ENCODE measurements at regions of chr13 and their contacts with region 1.

Region 1: GRCh38 chr13:31431722-31432137 is 232.0 kb downstream of the B3GLCT start:
- DNase-seq: peak; percentile 40
- ATAC-seq: peak; percentile 61
- H3K4me3 ChIP-seq: no peak overlapping the region
- H3K4me3 Mint-ChIP-seq: no peak overlapping the region
- H3K27ac ChIP-seq: no peak overlapping the region
- H3K27ac Mint-ChIP-seq: no peak overlapping the region
- H3K4me1 ChIP-seq: no peaks in the 10 kb centered on the region
- H3K4me1 Mint-ChIP-seq: no peaks in the 10 kb centered on the region
- H3K27me3 ChIP-seq: no peaks in the 10 kb centered on the region
- H3K27me3 Mint-ChIP-seq: peaks cover 19% of the 10 kb centered on the region
- CTCF ChIP-seq: peak; percentile 91

Region 2: DNA sequence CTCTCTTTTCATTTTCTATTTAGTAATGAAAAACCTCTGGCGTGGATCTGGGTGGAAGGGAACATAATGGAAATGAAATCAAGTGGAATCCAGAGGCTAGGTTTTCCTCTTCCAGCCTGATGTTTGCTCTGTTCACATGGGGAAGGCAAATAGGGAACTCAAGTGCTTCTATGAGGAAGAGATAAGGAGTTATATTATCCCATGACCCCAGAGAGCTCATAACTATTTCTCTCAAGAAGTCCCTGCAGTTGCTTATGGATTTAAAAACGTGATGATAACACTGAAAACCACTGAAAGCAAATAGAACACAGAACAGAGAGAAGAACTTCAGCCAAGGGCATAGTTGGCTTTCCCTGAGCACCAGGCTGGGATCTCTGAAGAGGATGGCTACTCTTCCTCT is 74.1 kb before region 1 on chr13:
- CTCF ChIA-PET with region 1: no interaction called
- POLR2A ChIA-PET with region 1: no interaction called
- intact Hi-C with region 1: no loop called
- DNase-seq: no peak
- ATAC-seq: no peak
- H3K4me3 ChIP-seq: no peak overlapping the region
- H3K4me3 Mint-ChIP-seq: no peak overlapping the region
- H3K27ac ChIP-seq: no peak overlapping the region
- H3K27ac Mint-ChIP-seq: no peak overlapping the region
- H3K4me1 ChIP-seq: no peaks in the 10 kb centered on the region
- H3K4me1 Mint-ChIP-seq: no peaks in the 10 kb centered on the region
- H3K27me3 ChIP-seq: no peaks in the 10 kb centered on the region
- H3K27me3 Mint-ChIP-seq: peaks cover 3% of the 10 kb centered on the region
- CTCF ChIP-seq: no peak

Region 3: DNA sequence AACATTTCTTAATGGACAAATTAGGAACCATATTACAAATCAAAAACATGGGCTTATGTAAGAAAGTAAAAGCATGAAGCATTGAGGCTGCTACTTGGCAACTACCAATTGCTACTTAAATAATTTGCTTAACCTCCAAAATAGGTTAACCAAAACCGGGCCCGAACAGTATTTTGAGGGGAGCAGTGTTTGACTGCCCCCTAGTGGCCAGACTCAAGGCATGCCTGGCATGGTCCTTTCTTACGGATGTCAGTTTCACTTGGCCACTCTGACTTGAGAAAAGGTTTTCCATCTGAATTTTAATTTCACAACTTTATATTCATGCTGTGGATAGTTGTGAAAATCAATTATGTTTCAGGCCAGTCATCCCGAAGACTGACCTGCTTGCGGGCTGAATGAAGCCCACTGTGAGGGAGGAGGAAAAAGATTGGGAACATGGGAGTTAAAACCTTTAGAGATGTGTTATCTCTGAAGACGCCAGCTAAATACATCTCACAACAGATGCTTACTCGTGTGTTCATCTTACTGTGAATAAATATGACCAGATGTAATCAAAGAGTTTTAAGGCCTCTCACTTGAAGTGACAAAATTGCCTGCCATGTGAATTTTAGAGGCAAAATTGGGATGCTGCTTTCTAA is 310.5 kb after region 1 on chr13:
- CTCF ChIA-PET with region 1: interaction called, 3 read pairs
- POLR2A ChIA-PET with region 1: no interaction called
- intact Hi-C with region 1: loop called (anchors 1 kb)
- DNase-seq: peak; percentile 63
- ATAC-seq: peak; percentile 45
- H3K4me3 ChIP-seq: no peak overlapping the region
- H3K4me3 Mint-ChIP-seq: no peak overlapping the region
- H3K27ac ChIP-seq: no peak overlapping the region
- H3K27ac Mint-ChIP-seq: no peak overlapping the region
- H3K4me1 ChIP-seq: peaks cover 0 to 4% of the 10 kb centered on the region in 2 donors
- H3K4me1 Mint-ChIP-seq: no peaks in the 10 kb centered on the region
- H3K27me3 ChIP-seq: no peaks in the 10 kb centered on the region
- H3K27me3 Mint-ChIP-seq: peaks cover 12% of the 10 kb centered on the region
- CTCF ChIP-seq: peak; percentile 99

Measured in B cell (primary cell).